Heart right ventricle (tissue), 16 donors: ENCODE measurements at regions of chr1 and their contacts with region 1.

Region 1: GRCh38 chr1:1406817-1407635 is at the start of gene MRPL20:
- DNase-seq: peak; percentile 95 to 96
- ATAC-seq: peak; percentile 95 to 99 (median 98)
- H3K4me3 ChIP-seq: peak within 1 kb of the TSS; percentile 69 to 99 (median 93)
- H3K27ac ChIP-seq: peak within 1 kb of the TSS; percentile 70 to 94 (median 88)
- H3K4me1 ChIP-seq: peaks cover 0 to 53% (median 32%) of the 10 kb centered on the region in 9 donors
- H3K27me3 ChIP-seq: no peaks in the 10 kb centered on the region
- CTCF ChIP-seq: no peak
- total RNA-seq, gene MRPL20: 116 to 162 (median 132) TPM

Region 2: GRCh38 chr1:1358433-1359261 is 48.4 kb before region 1 on chr1 and contains the start of gene MXRA8:
- intact Hi-C with region 1: no loop called
- DNase-seq: peak; percentile 75 to 80
- ATAC-seq: peak; percentile 27 to 77 (median 70)
- H3K4me3 ChIP-seq: peak within 1 kb of the TSS; percentile 19 to 69 (median 52)
- H3K27ac ChIP-seq: peak within 1 kb of the TSS; percentile 57 to 93 (median 85)
- H3K4me1 ChIP-seq: peaks cover 6 to 66% (median 33%) of the 10 kb centered on the region in 9 donors
- H3K27me3 ChIP-seq: peaks cover 0 to 86% (median 49%) of the 10 kb centered on the region in 7 donors
- CTCF ChIP-seq: no peak
- total RNA-seq, gene MXRA8: 7.2 to 23.3 (median 14.6) TPM

Region 3: GRCh38 chr1:1374929-1375662 is 31.9 kb before region 1 on chr1 and contains the start of gene AURKAIP1:
- intact Hi-C with region 1: loop called in 1 of 10 experiments (anchors 1 kb)
- DNase-seq: peak; percentile 96 to 99
- ATAC-seq: peak; percentile 93 to 98 (median 97)
- H3K4me3 ChIP-seq: peak within 1 kb of the TSS; percentile 76 to 100 (median 93)
- H3K27ac ChIP-seq: peak within 1 kb of the TSS; percentile 79 to 99 (median 96)
- H3K4me1 ChIP-seq: peaks cover 16 to 45% (median 38%) of the 10 kb centered on the region in 9 donors
- H3K27me3 ChIP-seq: no peaks in the 10 kb centered on the region
- CTCF ChIP-seq: peak in 7 of 9 donors; percentile 27 to 54 (median 31)
- total RNA-seq, gene AURKAIP1: 176 to 251 (median 193) TPM

Region 4: GRCh38 chr1:1435106-1435903 is 28.3 kb after region 1 on chr1 and contains the start of gene VWA1:
- intact Hi-C with region 1: loop called in 4 of 10 experiments (anchors 2 to 5 kb)
- DNase-seq: peak; percentile 60 to 83
- ATAC-seq: peak; percentile 36 to 57 (median 44)
- H3K4me3 ChIP-seq: peak within 1 kb of the TSS; percentile 50 to 69 (median 64)
- H3K27ac ChIP-seq: peak within 1 kb of the TSS; percentile 79 to 98 (median 92)
- H3K4me1 ChIP-seq: peaks cover 47 to 76% (median 64%) of the 10 kb centered on the region in 9 donors
- H3K27me3 ChIP-seq: peaks cover 0 to 48% (median 9%) of the 10 kb centered on the region in 7 donors
- CTCF ChIP-seq: peak in 1 of 9 donors; percentile 6
- total RNA-seq, gene VWA1: 10.8 to 52.8 (median 14.1) TPM

Region 5: DNA sequence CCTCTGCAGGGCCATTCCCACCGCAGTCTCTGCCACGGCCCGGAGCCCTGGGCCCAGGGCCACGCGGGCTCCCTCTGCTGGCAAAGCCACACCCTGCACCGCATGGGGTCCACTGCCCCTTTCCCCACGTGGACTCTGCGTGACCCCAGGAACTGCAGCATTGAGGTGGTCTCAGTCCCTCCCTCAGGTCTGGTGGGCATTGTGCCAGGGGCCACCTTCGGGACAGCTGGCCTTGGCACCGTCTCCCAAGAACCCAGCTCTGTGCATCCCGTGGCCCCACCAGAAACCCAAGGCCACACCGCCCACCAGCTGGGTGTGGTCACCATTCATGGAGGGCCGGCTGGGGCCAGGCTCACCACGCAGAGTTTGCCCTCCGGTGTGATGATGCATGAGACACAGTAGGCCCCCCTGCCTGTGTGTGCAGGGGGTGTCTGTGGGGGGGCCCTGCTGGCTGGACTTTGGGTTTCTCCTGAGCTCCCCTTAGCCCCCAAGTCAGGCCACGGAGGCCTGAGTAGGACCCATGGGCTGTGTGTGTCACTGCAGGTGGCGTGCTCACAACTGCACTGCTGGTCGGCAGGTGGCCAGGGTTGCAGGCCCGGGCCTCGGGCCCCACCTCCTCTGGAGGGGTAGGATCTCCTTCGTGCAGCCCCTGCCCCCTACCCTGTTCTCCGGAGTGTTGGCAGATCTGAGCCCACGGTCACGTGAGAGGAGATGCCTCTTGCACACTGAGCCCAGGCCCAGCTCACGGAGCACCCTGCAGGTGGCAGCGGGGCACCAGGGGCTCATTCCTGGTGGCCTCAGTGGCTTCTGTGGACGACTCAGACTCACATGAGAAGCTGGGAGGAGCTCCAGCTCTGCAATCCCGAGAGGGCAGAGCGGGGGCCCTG is 34.2 kb after region 1 on chr1:
- intact Hi-C with region 1: loop called in 3 of 10 experiments (anchors 5 kb)
- DNase-seq: peak in 1 of 2 donors; percentile 72
- ATAC-seq: peak; percentile 68 to 85 (median 77)
- H3K4me3 ChIP-seq: peak overlapping the region in 1 of 10 donors; percentile 21
- H3K27ac ChIP-seq: no peak overlapping the region
- H3K4me1 ChIP-seq: peaks cover 8 to 32% (median 19%) of the 10 kb centered on the region in 9 donors
- H3K27me3 ChIP-seq: peaks cover 0 to 24% (median 4%) of the 10 kb centered on the region in 7 donors
- CTCF ChIP-seq: peak; percentile 80 to 95 (median 90)

Region 6: GRCh38 chr1:1507305-1507704 is 100.3 kb after region 1 on chr1:
- intact Hi-C with region 1: loop called in 1 of 10 experiments (anchors 10 kb)
- DNase-seq: no peak
- ATAC-seq: no peak
- H3K4me3 ChIP-seq: no peak overlapping the region
- H3K27ac ChIP-seq: no peak overlapping the region
- H3K4me1 ChIP-seq: peaks cover 7 to 35% (median 17%) of the 10 kb centered on the region in 9 donors
- H3K27me3 ChIP-seq: no peaks in the 10 kb centered on the region
- CTCF ChIP-seq: no peak